ENCODE measurements at regions of chr16 and their contacts with region 1.

Region 1: DNA sequence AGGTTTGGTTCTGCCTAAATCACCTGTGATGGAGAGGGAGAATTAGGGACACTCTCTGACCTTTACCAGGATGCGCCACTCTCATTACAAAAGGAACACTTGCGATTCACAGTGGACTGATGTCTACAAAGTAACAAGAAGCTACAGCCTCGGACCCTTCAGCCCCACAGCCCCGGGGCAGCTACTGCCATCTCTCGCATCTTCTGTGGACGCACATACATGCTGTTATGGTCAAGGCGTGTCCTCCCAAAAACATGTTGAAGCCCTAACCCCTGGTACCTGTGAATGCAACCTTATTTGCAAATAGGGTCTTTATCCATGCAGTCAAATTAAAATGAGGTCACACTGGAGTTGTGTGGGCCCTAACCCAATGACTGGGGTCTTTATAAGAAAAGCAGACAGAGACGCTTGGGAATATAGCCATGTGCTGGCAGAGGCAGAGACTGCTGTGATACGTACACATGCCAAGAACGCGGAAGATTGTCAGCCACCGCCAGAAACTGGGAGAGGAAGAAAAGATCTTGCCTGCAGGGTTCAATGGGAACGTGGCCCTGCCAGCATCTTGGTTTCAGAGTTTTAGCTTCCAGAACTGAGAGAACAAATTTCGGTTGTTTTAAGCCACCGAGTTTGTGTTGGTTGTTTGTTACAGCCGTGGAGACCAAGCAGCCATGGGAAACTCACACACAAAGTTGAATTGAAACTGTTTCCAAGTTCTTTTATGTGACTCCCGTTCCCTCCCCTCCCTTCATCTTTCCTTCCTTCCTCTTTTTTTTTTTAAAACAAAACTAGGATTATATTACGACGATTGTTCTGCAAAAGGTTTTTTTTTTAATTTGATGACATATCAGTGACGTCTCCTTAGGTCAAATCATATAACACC is 23.1 kb downstream of the ATP2C2 start:
- DNase-seq: no peak
- H3K4me3 ChIP-seq: no peak overlapping the region
- H3K27ac ChIP-seq: no peak overlapping the region
- H3K4me1 ChIP-seq: peaks cover 14% of the 10 kb centered on the region
- H3K27me3 ChIP-seq: no peaks in the 10 kb centered on the region
- CTCF ChIP-seq: no peak

Region 2: GRCh38 chr16:84116720-84117493 is 274.5 kb before region 1 on chr16 and contains the start of gene MBTPS1:
- CTCF ChIA-PET with region 1: no interaction called
- POLR2A ChIA-PET with region 1: no interaction called
- intact Hi-C with region 1: no loop called
- DNase-seq: peak; percentile 93 to 99
- H3K4me3 ChIP-seq: peak within 1 kb of the TSS; percentile 87
- H3K27ac ChIP-seq: peak within 1 kb of the TSS; percentile 67
- H3K4me1 ChIP-seq: peaks cover 39% of the 10 kb centered on the region
- H3K27me3 ChIP-seq: no peaks in the 10 kb centered on the region
- CTCF ChIP-seq: no peak; the same call in 1 of the 2 replicates
- total RNA-seq, gene MBTPS1: 80.3 and 96.0 TPM in 2 replicates

Region 3: DNA sequence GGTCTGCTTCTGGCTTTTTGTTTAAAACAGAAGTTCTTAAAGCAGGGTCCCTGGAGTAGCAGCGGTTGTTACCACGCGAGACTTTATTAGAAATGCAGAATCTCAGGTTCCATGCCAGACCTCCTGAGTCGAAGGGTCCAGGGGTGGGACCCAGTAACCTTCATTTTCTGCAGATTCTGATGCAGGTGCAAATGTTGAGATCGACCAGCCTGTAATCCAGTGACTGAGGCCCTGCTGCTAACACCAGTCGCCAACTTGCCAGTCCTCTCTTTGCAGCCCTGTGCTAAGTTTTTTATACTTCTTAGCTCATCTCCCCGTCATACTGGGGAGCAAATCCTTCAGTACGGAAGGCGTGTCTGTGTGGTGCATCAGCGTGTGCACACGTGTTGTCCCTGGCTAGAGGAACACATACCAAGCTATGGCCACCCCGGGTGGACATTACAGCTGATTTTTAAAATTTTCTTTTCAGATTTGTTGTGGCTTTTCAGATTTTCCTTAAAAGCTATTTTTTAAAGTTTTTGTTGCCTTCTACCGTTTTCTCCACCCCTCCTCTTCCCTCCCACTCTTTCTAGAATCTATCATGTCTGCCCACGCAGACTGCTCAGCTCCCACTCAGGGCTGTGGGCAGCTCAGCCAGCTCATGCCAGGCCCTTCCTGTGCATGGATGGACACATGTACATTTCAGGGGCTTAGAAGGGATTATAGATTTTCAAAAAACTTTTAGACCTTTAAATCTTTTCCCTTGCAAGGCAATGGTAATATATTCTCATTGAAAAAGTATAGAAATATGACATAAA is 55.4 kb after region 1 on chr16:
- CTCF ChIA-PET with region 1: no interaction called
- POLR2A ChIA-PET with region 1: interaction called, 12 read pairs
- intact Hi-C with region 1: no loop called
- DNase-seq: no peak
- H3K4me3 ChIP-seq: no peak overlapping the region
- H3K27ac ChIP-seq: no peak overlapping the region
- H3K4me1 ChIP-seq: no peaks in the 10 kb centered on the region; the same call in 1 of the 2 replicates
- H3K27me3 ChIP-seq: no peaks in the 10 kb centered on the region
- CTCF ChIP-seq: no peak

Measured in PC-9 (cell line).